ENCODE measurements at regions of chr15 and their contacts with region 1.

Region 1: DNA sequence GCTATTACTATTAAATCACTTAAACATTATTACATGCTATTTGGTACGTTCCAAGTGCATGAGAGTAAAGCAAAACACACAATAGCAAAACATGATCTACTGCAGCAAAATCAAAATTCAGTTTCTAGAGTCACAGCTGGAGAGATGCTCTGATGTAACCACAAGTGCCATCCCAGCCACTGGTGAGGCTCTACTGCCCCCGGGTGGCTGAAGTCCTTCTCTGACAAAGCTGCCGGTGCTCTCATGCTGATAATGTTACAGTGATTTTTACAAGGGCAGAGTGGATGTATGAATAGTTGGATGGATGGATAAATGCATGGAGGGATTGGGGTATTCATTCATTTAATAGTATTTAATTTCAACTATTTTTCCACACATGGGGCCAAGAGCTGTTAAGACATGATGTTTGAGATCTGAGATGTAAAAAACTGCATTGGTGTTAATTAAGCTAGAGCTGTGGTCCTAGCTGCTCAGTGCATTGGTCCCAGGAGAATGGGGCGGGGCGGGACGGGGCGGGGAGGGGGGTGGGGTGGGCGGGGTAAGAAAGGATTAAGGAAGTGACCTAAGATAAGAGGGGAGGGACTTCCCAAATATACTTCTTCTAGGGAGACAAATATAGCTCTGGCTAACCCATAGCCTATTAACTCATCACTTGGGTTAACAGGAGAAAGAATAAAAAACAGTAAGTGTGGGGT is 5.3 kb upstream of the SPESP1 start:
- H3K4me3 ChIP-seq: no peak overlapping the region
- H3K27ac ChIP-seq: no peak overlapping the region
- H3K4me1 ChIP-seq: no peaks in the 10 kb centered on the region
- CTCF ChIP-seq: peak; percentile 92

Region 2: GRCh38 chr15:68550481-68551295 is 374.3 kb before region 1 on chr15:
- CTCF ChIA-PET with region 1: interaction called, 137 read pairs
- POLR2A ChIA-PET with region 1: no interaction called
- H3K4me3 ChIP-seq: no peak overlapping the region
- H3K27ac ChIP-seq: no peak overlapping the region
- H3K4me1 ChIP-seq: no peaks in the 10 kb centered on the region
- CTCF ChIP-seq: peak; percentile 78

Region 3: DNA sequence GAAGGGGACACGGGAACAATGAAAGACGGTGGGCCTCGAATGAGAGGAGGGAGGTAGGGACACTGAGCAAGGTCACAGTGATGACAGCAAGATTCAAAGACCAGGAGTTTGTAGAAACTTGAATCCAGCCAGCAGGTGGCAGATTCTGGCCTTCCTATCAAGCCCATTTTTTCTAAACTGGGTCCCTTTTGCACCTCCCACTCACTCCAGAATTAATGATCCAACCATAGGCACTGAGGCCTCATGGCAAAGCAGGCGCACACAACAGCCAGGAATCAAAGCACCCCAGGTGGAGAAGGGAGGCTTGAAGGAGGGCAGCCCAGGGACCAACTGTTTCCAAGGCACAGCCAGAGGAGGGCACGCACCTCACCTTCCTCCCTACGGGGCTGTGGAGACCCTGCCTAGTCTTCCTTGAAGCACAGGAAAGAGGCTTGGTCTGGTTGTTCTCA is 194.5 kb before region 1 on chr15:
- CTCF ChIA-PET with region 1: interaction called, 20 read pairs
- POLR2A ChIA-PET with region 1: no interaction called
- H3K4me3 ChIP-seq: no peak overlapping the region
- H3K27ac ChIP-seq: no peak overlapping the region
- H3K4me1 ChIP-seq: no peaks in the 10 kb centered on the region; the same call in 1 of the 2 replicates
- CTCF ChIP-seq: peak; percentile 74

Region 4: DNA sequence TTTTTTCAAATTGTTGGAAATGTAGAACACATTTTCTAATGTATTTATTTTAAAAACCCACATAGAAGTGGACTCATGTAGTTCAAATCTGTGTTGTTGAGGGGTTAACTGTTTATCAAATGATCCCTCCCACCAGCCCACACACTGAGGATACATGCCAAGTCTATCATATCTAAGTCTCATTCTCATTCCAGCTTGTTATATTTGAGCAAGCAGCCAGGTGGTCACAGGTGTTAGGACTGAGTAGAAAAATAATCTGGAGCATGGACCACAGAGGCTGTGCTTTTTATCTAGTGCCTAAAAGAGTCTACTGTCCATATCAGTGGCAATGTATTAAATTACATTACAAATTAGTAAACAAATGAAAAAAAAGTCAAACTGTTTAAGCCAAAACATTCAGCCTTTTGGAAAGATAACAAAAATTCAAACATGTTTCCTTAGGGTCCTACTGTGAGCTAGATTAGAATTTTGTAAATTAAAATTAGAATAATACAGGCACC is 15.4 kb before region 1 on chr15:
- CTCF ChIA-PET with region 1: interaction called, 20 read pairs
- POLR2A ChIA-PET with region 1: no interaction called
- H3K4me3 ChIP-seq: no peak overlapping the region
- H3K27ac ChIP-seq: no peak overlapping the region
- H3K4me1 ChIP-seq: 0 out of 2 replicates have a peak, but pooled peaks cover 4% of the 10 kb centered on the region
- CTCF ChIP-seq: no peak

Region 5: GRCh38 chr15:69031013-69032001 is 106.3 kb after region 1 on chr15:
- CTCF ChIA-PET with region 1: interaction called, 12 read pairs
- POLR2A ChIA-PET with region 1: interaction called, 6 read pairs
- H3K4me3 ChIP-seq: peak overlapping the region; percentile 46
- H3K27ac ChIP-seq: no peak overlapping the region
- H3K4me1 ChIP-seq: no peaks in the 10 kb centered on the region
- CTCF ChIP-seq: peak; percentile 98